ENCODE measurements at regions of chr1 and their contacts with region 1.

Region 1: GRCh38 chr1:51296383-51297357 is 33.7 kb downstream of the TTC39A start:
- DNase-seq: peak; percentile 61
- ATAC-seq: peak; percentile 92
- H3K4me3 ChIP-seq: no peak overlapping the region
- H3K27ac ChIP-seq: peak overlapping the region; percentile 32; the same call in 1 of the 2 replicates
- H3K4me1 ChIP-seq: peaks cover 0 to 23% of the 10 kb centered on the region in 2 experiments; a peak in 2 of 4 replicates
- H3K27me3 ChIP-seq: no peaks in the 10 kb centered on the region
- CTCF ChIP-seq: peak; percentile 83 to 98 (median 93)
- POLR2A ChIP-seq: no peak
- RAD21 ChIP-seq: peak; percentile 90

Region 2: DNA sequence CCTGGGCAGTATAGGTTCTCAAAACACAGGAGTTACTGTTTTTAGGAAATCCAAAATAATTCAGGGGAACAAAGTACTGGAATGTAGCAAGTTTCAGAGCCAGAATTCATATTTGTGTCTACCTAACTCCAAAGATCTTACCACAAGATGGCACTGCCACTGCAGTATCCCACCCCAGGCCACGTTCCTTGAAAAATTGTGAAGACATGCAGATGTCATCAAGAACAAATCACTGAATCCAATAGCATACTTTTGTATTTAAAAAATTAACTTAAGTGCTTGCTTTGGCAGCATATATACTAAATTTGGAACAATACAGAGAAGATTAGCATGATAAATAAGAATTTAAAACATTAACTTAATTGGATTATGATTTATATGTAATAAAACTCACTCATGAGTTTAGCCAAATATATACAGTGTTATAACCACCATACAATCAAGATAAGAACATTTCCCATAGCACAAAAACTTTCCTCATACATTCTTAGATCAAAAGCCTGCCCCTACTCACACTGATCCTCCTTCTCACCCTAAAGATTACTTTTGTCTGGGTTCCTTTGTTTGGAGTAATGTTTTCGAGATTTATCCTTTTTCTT is 546.5 kb before region 1 on chr1:
- CTCF ChIA-PET with region 1: no interaction called
- POLR2A ChIA-PET with region 1: no interaction called
- RAD21 ChIA-PET with region 1: no interaction called
- intact Hi-C with region 1: loop called (anchors 10 kb)
- DNase-seq: peak; percentile 10
- ATAC-seq: peak; percentile 70
- H3K4me3 ChIP-seq: no peak overlapping the region
- H3K27ac ChIP-seq: no peak overlapping the region
- H3K4me1 ChIP-seq: no peaks in the 10 kb centered on the region
- H3K27me3 ChIP-seq: no peaks in the 10 kb centered on the region
- CTCF ChIP-seq: peak; percentile 51 to 60 (median 60); a peak in 5 of 6 replicates
- POLR2A ChIP-seq: no peak
- RAD21 ChIP-seq: peak; percentile 62

Measured in HCT116 (cell line).